ENCODE measurements at regions of chr4 and their contacts with region 1.

Region 1: DNA sequence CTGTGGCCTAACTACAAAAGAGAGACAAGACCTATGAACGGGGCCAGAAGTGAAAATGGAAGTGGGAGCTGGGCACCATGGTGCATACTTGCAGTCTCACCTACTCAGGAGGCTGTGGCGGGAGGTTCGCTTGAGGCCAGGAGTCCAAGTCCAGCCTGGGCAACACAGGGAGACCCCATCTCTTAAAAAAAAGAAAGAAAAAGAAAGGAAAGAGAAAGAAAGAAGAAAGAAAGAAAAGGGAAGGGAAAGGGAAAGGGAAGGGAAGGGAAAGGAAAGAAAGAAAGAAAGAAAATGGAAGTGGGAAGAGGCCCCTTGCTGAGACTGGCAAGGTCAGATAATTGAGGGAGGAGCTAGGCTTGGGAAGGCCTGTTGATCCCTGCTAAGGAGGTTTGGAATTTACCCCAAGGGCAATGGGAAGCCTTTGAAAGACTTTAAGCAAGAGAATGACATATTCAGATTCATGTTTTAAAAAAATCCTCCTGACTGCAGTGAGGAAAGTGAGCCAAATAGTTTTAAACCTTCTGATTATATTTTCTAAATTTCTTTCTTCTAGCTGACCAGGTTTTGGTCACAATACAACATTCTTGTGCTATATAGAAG is 17.7 kb upstream of the HERC5 start:
- DNase-seq: no peak
- ATAC-seq: no peak
- H3K4me3 ChIP-seq: no peak overlapping the region
- H3K4me3 Mint-ChIP-seq: no peak overlapping the region
- H3K27ac ChIP-seq: no peak overlapping the region
- H3K27ac Mint-ChIP-seq: peak overlapping the region; percentile 5 to 71
- H3K4me1 ChIP-seq: no peaks in the 10 kb centered on the region
- H3K4me1 Mint-ChIP-seq: no peaks in the 10 kb centered on the region
- H3K27me3 ChIP-seq: no peaks in the 10 kb centered on the region
- H3K27me3 Mint-ChIP-seq: no peaks in the 10 kb centered on the region

Region 2: DNA sequence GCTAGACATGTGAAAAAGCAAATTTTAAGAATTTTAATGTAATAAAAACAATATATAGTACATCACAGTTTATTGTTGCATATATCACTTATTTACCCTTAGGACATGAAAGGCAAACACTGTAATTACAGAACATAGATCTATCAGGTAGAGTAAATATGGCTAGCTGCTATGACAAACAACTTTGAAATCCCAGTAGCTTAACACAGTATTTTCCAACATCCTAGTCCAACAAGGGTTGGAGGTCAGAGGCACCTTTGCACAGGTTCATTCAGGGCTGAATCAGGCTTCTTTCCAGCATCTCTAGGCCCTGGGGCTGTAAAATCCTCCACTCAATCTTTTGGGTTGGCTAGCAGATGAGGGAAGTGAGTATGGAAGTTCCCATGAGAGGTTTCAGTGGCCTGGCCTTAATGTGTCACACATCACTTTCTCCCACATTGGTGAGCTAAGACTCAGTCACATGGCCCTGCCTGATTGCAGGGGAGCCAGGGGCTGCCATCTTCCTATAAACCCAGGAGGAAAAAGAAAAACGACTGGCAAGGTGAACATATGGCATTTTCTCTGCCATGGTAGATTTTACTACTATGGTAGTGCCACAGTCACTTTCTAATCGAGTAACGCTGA is 27.7 kb before region 1 on chr4:
- CTCF ChIA-PET with region 1: no interaction called
- POLR2A ChIA-PET with region 1: interaction called in 1 of 2 experiments, 14 read pairs
- DNase-seq: no peak
- ATAC-seq: no peak
- H3K4me3 ChIP-seq: no peak overlapping the region
- H3K4me3 Mint-ChIP-seq: no peak overlapping the region
- H3K27ac ChIP-seq: no peak overlapping the region
- H3K27ac Mint-ChIP-seq: no peak overlapping the region
- H3K4me1 ChIP-seq: no peaks in the 10 kb centered on the region
- H3K4me1 Mint-ChIP-seq: no peaks in the 10 kb centered on the region
- H3K27me3 ChIP-seq: no peaks in the 10 kb centered on the region
- H3K27me3 Mint-ChIP-seq: no peaks in the 10 kb centered on the region

Region 3: DNA sequence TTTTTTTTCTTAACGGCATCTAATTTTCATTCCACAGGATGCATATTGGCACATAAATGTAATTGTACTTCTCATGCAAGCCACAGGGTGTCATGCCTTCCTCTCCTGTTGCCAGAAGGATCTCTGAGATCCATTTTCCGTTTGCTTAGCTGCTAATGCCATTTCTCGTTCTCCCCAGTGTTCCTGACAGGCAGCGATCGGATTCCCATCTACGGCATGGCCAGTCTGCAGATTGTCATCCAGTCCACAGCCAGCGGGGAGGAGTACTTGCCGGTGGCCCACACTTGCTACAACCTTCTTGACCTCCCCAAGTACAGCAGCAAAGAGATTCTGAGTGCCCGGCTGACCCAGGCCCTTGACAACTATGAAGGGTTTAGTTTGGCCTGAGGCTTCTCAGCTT is 267.3 kb after region 1 on chr4:
- CTCF ChIA-PET with region 1: no interaction called
- POLR2A ChIA-PET with region 1: no interaction called
- DNase-seq: no peak
- ATAC-seq: no peak
- H3K4me3 ChIP-seq: no peak overlapping the region
- H3K4me3 Mint-ChIP-seq: no peak overlapping the region
- H3K27ac ChIP-seq: no peak overlapping the region
- H3K27ac Mint-ChIP-seq: no peak overlapping the region
- H3K4me1 ChIP-seq: no peaks in the 10 kb centered on the region
- H3K4me1 Mint-ChIP-seq: no peaks in the 10 kb centered on the region
- H3K27me3 ChIP-seq: no peaks in the 10 kb centered on the region
- H3K27me3 Mint-ChIP-seq: no peaks in the 10 kb centered on the region